ENCODE measurements at regions of chr22 and their contacts with region 1.

Region 1: DNA sequence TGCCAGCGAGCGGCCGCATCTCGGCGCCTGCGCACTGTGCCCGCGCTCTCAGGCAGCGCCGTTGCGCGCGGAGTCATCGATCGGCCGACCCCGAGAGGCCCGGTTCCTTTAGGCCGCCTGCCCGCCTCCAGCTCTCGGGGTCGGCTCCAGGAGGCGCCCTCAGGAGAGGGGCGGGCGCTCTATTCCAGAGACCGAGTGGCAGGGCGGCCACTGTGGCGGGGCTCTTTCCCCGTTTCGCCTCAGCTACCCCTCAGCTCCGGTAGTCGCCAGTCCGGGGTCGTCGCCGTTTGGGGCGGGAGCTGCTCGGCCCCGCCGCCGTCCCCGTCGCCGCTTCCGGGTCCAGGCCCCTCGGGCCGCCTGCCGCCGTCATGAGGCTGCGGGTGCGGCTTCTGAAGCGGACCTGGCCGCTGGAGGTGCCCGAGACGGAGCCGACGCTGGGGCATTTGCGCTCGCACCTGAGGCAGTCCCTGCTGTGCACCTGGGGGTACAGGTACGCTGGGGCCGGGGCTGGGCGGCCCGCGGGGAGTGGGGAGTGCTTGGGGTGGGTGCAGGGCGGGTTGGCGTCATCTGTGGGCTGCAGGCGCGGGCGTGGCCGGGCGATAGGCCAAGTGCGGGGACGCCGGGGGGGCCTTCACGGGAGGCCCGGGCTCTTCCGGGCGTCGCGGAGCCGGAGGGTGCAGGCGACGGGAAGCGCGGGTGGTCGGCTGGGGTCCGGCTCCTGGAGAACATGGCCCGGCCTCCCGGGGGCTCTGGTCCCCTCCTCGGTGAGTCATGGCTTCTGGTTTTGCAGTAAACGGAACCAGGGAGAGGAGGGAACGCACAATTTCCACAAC is at the start of gene FBXO7:
- DNase-seq: peak; percentile 90
- ATAC-seq: peak; percentile 88
- H3K4me3 ChIP-seq: peak within 1 kb of the TSS; percentile 67
- H3K27ac ChIP-seq: peak within 1 kb of the TSS; percentile 90
- H3K4me1 ChIP-seq: peaks cover 13% of the 10 kb centered on the region
- H3K27me3 ChIP-seq: no peaks in the 10 kb centered on the region
- CTCF ChIP-seq: peak; percentile 59
- POLR2A ChIP-seq: peak; percentile 86
- RAD21 ChIP-seq: no peak
- total RNA-seq, gene FBXO7: 61.4 and 71.5 TPM in 2 replicates

Region 2: GRCh38 chr22:31661851-31662656 is 812.8 kb before region 1 on chr22 and contains the start of gene PISD:
- CTCF ChIA-PET with region 1: no interaction called
- POLR2A ChIA-PET with region 1: no interaction called
- dilution Hi-C with region 1: no loop called
- in situ Hi-C with region 1: no loop called
- intact Hi-C with region 1: loop called (anchors 10 kb)
- DNase-seq: peak; percentile 91
- ATAC-seq: peak; percentile 96
- H3K4me3 ChIP-seq: peak within 1 kb of the TSS; percentile 83
- H3K27ac ChIP-seq: peak within 1 kb of the TSS; percentile 48
- H3K4me1 ChIP-seq: peaks cover 3% of the 10 kb centered on the region
- H3K27me3 ChIP-seq: no peaks in the 10 kb centered on the region
- CTCF ChIP-seq: no peak
- POLR2A ChIP-seq: peak; percentile 70; the same call in 1 of the 2 replicates
- RAD21 ChIP-seq: no peak
- total RNA-seq, gene PISD: 29.2 and 34.1 TPM in 2 replicates

Region 3: GRCh38 chr22:31749636-31750364 is 725.1 kb before region 1 on chr22 and contains the start of gene PRR14L:
- CTCF ChIA-PET with region 1: no interaction called
- POLR2A ChIA-PET with region 1: no interaction called
- dilution Hi-C with region 1: no loop called
- in situ Hi-C with region 1: no loop called
- intact Hi-C with region 1: no loop called
- DNase-seq: peak; percentile 90
- ATAC-seq: peak; percentile 86
- H3K4me3 ChIP-seq: peak within 1 kb of the TSS; percentile 73
- H3K27ac ChIP-seq: peak within 1 kb of the TSS; percentile 87
- H3K4me1 ChIP-seq: peaks cover 10% of the 10 kb centered on the region
- H3K27me3 ChIP-seq: no peaks in the 10 kb centered on the region
- CTCF ChIP-seq: peak; percentile 1; the same call in 1 of the 2 replicates
- POLR2A ChIP-seq: peak; percentile 85
- RAD21 ChIP-seq: peak; percentile 15; the same call in 1 of the 2 replicates
- total RNA-seq, gene PRR14L: 19.7 and 20.6 TPM in 2 replicates

Region 4: GRCh38 chr22:31977141-31977841 is 497.6 kb before region 1 on chr22:
- CTCF ChIA-PET with region 1: interaction called, 7 read pairs
- POLR2A ChIA-PET with region 1: no interaction called
- dilution Hi-C with region 1: no loop called
- in situ Hi-C with region 1: loop called (anchors 10 kb)
- intact Hi-C with region 1: loop called (anchors 2 kb)
- DNase-seq: peak; percentile 54
- ATAC-seq: peak; percentile 95
- H3K4me3 ChIP-seq: no peak overlapping the region
- H3K27ac ChIP-seq: no peak overlapping the region
- H3K4me1 ChIP-seq: no peaks in the 10 kb centered on the region
- H3K27me3 ChIP-seq: peaks cover 2% of the 10 kb centered on the region; the same call in 1 of the 2 replicates
- CTCF ChIP-seq: peak; percentile 78
- POLR2A ChIP-seq: 0 out of 2 replicates have a peak, but pooled peaks have one; percentile 38
- RAD21 ChIP-seq: peak; percentile 88

Region 5: DNA sequence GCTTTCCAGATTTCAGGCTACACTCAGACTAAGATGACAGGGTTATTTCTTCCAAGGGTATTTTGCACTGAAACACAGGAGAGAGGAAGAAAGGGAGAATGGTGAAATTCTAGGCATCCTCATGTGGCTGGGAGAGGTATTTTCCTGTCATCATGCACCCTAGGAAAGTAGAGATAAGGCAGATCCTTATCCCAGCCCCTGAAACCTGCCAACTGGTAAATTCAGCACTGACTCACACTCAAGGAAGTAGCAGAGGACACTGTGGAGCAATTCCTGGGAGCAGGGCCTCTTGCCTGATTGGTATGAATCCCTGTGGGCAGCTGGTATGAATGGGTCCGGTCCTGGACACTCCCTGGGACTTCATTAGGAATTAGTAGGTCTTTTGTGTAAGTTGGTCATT is 469.4 kb before region 1 on chr22:
- CTCF ChIA-PET with region 1: no interaction called
- POLR2A ChIA-PET with region 1: no interaction called
- dilution Hi-C with region 1: no loop called
- in situ Hi-C with region 1: no loop called
- intact Hi-C with region 1: no loop called
- DNase-seq: peak; percentile 25
- ATAC-seq: peak; percentile 32; the same call in 1 of the 2 replicates
- H3K4me3 ChIP-seq: no peak overlapping the region
- H3K27ac ChIP-seq: no peak overlapping the region
- H3K4me1 ChIP-seq: no peaks in the 10 kb centered on the region
- H3K27me3 ChIP-seq: no peaks in the 10 kb centered on the region; the same call in none of the 2 replicates
- CTCF ChIP-seq: no peak
- POLR2A ChIP-seq: no peak
- RAD21 ChIP-seq: no peak

Region 6: GRCh38 chr22:32202539-32203180 is 272.2 kb before region 1 on chr22:
- CTCF ChIA-PET with region 1: no interaction called
- POLR2A ChIA-PET with region 1: no interaction called
- dilution Hi-C with region 1: no loop called
- in situ Hi-C with region 1: no loop called
- intact Hi-C with region 1: loop called (anchors 1 kb)
- DNase-seq: peak; percentile 22
- ATAC-seq: peak; percentile 76
- H3K4me3 ChIP-seq: no peak overlapping the region
- H3K27ac ChIP-seq: no peak overlapping the region
- H3K4me1 ChIP-seq: no peaks in the 10 kb centered on the region
- H3K27me3 ChIP-seq: peaks cover 18% of the 10 kb centered on the region; the same call in 1 of the 2 replicates
- CTCF ChIP-seq: peak; percentile 41
- POLR2A ChIP-seq: no peak
- RAD21 ChIP-seq: peak; percentile 32; the same call in 1 of the 2 replicates

Region 7: DNA sequence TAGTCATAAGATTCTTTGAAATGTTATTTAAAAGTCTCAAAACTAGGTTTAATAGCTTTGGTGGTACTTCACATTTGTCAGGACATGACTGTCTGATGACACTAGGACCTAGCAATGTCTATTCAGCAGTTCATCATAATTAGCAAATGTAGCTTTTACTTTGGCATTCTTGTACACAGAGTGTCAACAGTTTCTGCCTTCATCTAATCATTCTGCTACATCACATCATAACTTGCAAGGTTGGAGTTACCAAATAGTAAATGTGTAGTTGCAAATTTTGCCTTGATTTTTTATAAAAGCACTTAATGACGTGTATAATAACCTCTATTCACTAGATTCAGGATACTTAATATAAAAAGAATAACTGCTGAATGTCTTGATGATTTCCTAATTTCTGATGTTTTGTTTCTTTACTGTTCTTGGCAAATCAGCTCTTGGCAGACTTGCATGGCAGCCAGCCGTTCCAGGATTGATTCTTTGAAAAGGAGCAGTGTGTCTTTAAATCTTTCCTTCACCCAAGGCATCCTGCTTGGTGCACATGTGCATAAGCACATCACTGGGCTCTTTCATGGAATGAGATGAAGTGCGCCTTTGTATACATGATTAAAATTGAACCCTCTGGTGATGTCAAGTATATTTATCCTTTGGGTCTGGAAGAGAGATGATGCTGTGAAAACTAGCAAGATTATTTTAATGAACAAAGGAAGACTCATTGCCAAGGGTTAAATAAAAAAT is 12.0 kb after region 1 on chr22:
- CTCF ChIA-PET with region 1: interaction called, 10 read pairs
- POLR2A ChIA-PET with region 1: no interaction called
- dilution Hi-C with region 1: no loop called
- in situ Hi-C with region 1: no loop called
- intact Hi-C with region 1: loop called (anchors 2 kb)
- DNase-seq: no peak
- ATAC-seq: no peak
- H3K4me3 ChIP-seq: no peak overlapping the region
- H3K27ac ChIP-seq: no peak overlapping the region
- H3K4me1 ChIP-seq: no peaks in the 10 kb centered on the region; the same call in 1 of the 2 replicates
- H3K27me3 ChIP-seq: no peaks in the 10 kb centered on the region
- CTCF ChIP-seq: no peak
- POLR2A ChIP-seq: no peak
- RAD21 ChIP-seq: no peak

Region 8: DNA sequence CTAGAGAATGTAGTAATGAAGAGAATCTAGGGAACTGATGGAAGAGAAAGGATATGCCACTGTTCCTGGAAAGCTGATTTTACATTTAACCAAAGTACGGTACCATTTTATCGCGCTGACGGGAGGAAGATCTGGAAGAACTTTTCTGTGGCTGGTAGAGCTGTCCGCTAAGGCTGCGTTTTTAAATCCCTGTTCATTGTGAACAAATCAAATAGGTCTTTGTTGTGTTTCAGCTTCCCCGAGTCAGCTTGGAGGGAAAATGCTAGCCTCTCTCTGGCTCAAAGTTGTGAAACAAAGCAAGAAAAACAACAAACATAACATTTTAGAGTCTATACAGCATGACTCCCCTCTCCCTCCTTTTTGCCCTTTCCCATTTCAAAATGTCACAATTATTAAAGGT is 34.2 kb after region 1 on chr22:
- CTCF ChIA-PET with region 1: no interaction called
- POLR2A ChIA-PET with region 1: no interaction called
- dilution Hi-C with region 1: no loop called
- in situ Hi-C with region 1: no loop called
- intact Hi-C with region 1: no loop called
- DNase-seq: no peak
- ATAC-seq: no peak
- H3K4me3 ChIP-seq: no peak overlapping the region
- H3K27ac ChIP-seq: no peak overlapping the region
- H3K4me1 ChIP-seq: no peaks in the 10 kb centered on the region
- H3K27me3 ChIP-seq: no peaks in the 10 kb centered on the region
- CTCF ChIP-seq: no peak
- POLR2A ChIP-seq: no peak
- RAD21 ChIP-seq: no peak

Region 9: GRCh38 chr22:32985899-32986765 is 511.3 kb after region 1 on chr22:
- CTCF ChIA-PET with region 1: no interaction called
- POLR2A ChIA-PET with region 1: no interaction called
- dilution Hi-C with region 1: no loop called
- in situ Hi-C with region 1: no loop called
- intact Hi-C with region 1: loop called (anchors 5 kb)
- DNase-seq: peak; percentile 71
- ATAC-seq: peak; percentile 100
- H3K4me3 ChIP-seq: no peak overlapping the region
- H3K27ac ChIP-seq: no peak overlapping the region
- H3K4me1 ChIP-seq: no peaks in the 10 kb centered on the region
- H3K27me3 ChIP-seq: peaks cover 3% of the 10 kb centered on the region
- CTCF ChIP-seq: peak; percentile 86
- POLR2A ChIP-seq: no peak
- RAD21 ChIP-seq: peak; percentile 90

Region 10: GRCh38 chr22:33209930-33210784 is 735.3 kb after region 1 on chr22:
- CTCF ChIA-PET with region 1: no interaction called
- POLR2A ChIA-PET with region 1: no interaction called
- dilution Hi-C with region 1: no loop called
- in situ Hi-C with region 1: loop called (anchors 25 kb)
- intact Hi-C with region 1: no loop called
- DNase-seq: peak; percentile 9
- ATAC-seq: peak; percentile 83
- H3K4me3 ChIP-seq: no peak overlapping the region
- H3K27ac ChIP-seq: no peak overlapping the region
- H3K4me1 ChIP-seq: no peaks in the 10 kb centered on the region
- H3K27me3 ChIP-seq: no peaks in the 10 kb centered on the region; the same call in 1 of the 2 replicates
- CTCF ChIP-seq: peak; percentile 48
- POLR2A ChIP-seq: no peak
- RAD21 ChIP-seq: peak; percentile 50

Measured in IMR-90 (cell line).